Endothelial cell of umbilical vein (primary cell): ENCODE measurements at regions of chr12 and their contacts with region 1.

Region 1: GRCh38 chr12:8544295-8544694 is 3.6 kb upstream of the CLEC4E start:
- DNase-seq: peak; percentile 81
- H3K4me3 ChIP-seq: no peak overlapping the region
- H3K27ac ChIP-seq: no peak overlapping the region
- H3K4me1 ChIP-seq: no peaks in the 10 kb centered on the region
- H3K27me3 ChIP-seq: peaks cover 10 to 22% of the 10 kb centered on the region in 2 experiments
- CTCF ChIP-seq: peak; percentile 74 to 81
- POLR2A ChIP-seq: no peak

Region 2: GRCh38 chr12:7970475-7971252 is 573.6 kb before region 1 on chr12:
- CTCF ChIA-PET with region 1: no interaction called
- POLR2A ChIA-PET with region 1: no interaction called
- dilution Hi-C with region 1: no loop called
- intact Hi-C with region 1: no loop called
- DNase-seq: peak; percentile 94
- H3K4me3 ChIP-seq: peak overlapping the region; percentile 5 to 41 (median 40)
- H3K27ac ChIP-seq: peak overlapping the region; percentile 60
- H3K4me1 ChIP-seq: peaks cover 17% of the 10 kb centered on the region
- H3K27me3 ChIP-seq: no peaks in the 10 kb centered on the region
- CTCF ChIP-seq: no peak
- POLR2A ChIP-seq: peak; percentile 59

Region 3: DNA sequence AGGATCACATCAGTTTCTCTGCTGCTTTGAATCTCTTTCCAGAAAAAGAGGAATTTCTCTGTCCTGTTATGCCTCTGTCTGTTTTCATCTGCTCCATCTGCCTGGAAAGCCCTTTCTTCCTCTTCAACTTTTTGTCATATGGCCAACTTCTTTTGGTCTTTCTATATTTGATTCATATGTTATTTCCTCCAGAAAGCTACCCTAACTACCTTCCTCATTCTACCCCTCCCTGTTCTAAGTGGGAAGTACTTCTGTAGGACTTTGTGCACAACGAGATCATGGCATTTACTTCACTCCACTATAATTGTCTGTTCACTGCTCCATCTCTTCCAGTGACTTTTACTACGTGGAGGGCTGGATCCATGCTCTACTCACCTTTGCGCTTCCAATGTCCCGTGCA is 25.1 kb before region 1 on chr12:
- CTCF ChIA-PET with region 1: interaction called, 11 read pairs
- POLR2A ChIA-PET with region 1: no interaction called
- dilution Hi-C with region 1: no loop called
- intact Hi-C with region 1: no loop called
- DNase-seq: no peak
- H3K4me3 ChIP-seq: no peak overlapping the region
- H3K27ac ChIP-seq: no peak overlapping the region
- H3K4me1 ChIP-seq: no peaks in the 10 kb centered on the region
- H3K27me3 ChIP-seq: peaks cover 0 to 8% of the 10 kb centered on the region in 2 experiments
- CTCF ChIP-seq: no peak
- POLR2A ChIP-seq: no peak

Region 4: GRCh38 chr12:8572507-8572906 is 28.2 kb after region 1 on chr12:
- CTCF ChIA-PET with region 1: interaction called, 10 read pairs
- POLR2A ChIA-PET with region 1: no interaction called
- dilution Hi-C with region 1: no loop called
- intact Hi-C with region 1: no loop called
- DNase-seq: no peak
- H3K4me3 ChIP-seq: no peak overlapping the region
- H3K27ac ChIP-seq: no peak overlapping the region
- H3K4me1 ChIP-seq: no peaks in the 10 kb centered on the region
- H3K27me3 ChIP-seq: no peaks in the 10 kb centered on the region
- CTCF ChIP-seq: no peak
- POLR2A ChIP-seq: no peak

Region 5: GRCh38 chr12:8622646-8623045 is 78.4 kb after region 1 on chr12:
- CTCF ChIA-PET with region 1: interaction called, 24 read pairs
- POLR2A ChIA-PET with region 1: no interaction called
- dilution Hi-C with region 1: no loop called
- intact Hi-C with region 1: no loop called
- DNase-seq: no peak
- H3K4me3 ChIP-seq: no peak overlapping the region
- H3K27ac ChIP-seq: no peak overlapping the region
- H3K4me1 ChIP-seq: peaks cover 14% of the 10 kb centered on the region
- H3K27me3 ChIP-seq: no peaks in the 10 kb centered on the region
- CTCF ChIP-seq: no peak
- POLR2A ChIP-seq: no peak

Region 6: GRCh38 chr12:8662593-8662992 is 118.3 kb after region 1 on chr12 and contains the start of gene MFAP5:
- CTCF ChIA-PET with region 1: interaction called, 56 read pairs
- POLR2A ChIA-PET with region 1: no interaction called
- dilution Hi-C with region 1: no loop called
- intact Hi-C with region 1: no loop called
- DNase-seq: no peak
- H3K4me3 ChIP-seq: no peak within 1 kb of the TSS
- H3K27ac ChIP-seq: no peak within 1 kb of the TSS
- H3K4me1 ChIP-seq: no peaks in the 10 kb centered on the region
- H3K27me3 ChIP-seq: peaks cover 2 to 9% of the 10 kb centered on the region in 2 experiments
- CTCF ChIP-seq: no peak
- POLR2A ChIP-seq: no peak
- total RNA-seq, gene MFAP5: not detected in 2 replicates

Region 7: DNA sequence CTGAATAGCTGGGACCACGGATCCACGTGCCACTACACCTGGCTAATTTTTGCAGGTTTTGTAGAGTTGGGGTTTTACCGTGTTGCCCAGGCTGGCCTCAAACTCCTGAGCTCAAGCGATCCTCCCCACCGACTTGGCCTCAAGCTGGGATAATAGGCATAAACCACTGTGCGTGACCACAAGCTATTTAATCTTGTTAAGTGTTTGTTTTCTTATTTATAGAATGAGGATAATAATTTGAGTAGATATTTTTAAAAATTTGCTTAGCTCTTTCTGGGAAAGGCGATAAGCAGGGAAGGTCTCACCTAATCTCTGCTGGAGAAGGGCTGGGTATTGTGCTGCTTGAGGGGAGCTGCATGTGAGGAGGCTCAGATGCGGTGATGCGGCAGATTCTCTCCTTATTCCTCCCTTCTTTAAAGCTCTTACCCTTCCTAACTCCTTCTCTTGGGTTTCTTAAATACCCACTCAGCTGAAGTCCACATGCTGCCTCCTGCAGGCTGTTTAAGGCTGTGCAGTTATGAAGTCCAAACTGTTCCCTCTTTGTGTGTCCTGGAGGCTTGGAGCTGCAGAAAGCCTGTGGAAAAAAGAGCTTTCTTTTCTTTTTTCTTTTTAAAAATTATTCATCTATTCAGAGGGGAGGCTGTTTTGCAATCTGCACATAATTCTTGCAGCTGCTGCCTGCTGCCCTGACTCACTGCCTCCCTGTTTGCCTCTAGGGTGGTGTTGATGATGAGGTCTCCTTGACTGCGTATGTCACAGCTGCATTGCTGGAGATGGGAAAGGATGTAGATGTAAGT is 316.1 kb after region 1 on chr12:
- CTCF ChIA-PET with region 1: interaction called, 29 read pairs
- POLR2A ChIA-PET with region 1: no interaction called
- dilution Hi-C with region 1: no loop called
- intact Hi-C with region 1: no loop called
- DNase-seq: peak; percentile 59
- H3K4me3 ChIP-seq: no peak overlapping the region
- H3K27ac ChIP-seq: no peak overlapping the region
- H3K4me1 ChIP-seq: no peaks in the 10 kb centered on the region
- H3K27me3 ChIP-seq: no peaks in the 10 kb centered on the region
- CTCF ChIP-seq: peak; percentile 66 to 70
- POLR2A ChIP-seq: no peak

Region 8: GRCh38 chr12:9049520-9050133 is 505.3 kb after region 1 on chr12:
- CTCF ChIA-PET with region 1: interaction called, 155 read pairs
- POLR2A ChIA-PET with region 1: no interaction called
- dilution Hi-C with region 1: no loop called
- intact Hi-C with region 1: loop called (anchors 2 kb)
- DNase-seq: peak; percentile 62
- H3K4me3 ChIP-seq: no peak overlapping the region
- H3K27ac ChIP-seq: no peak overlapping the region
- H3K4me1 ChIP-seq: no peaks in the 10 kb centered on the region
- H3K27me3 ChIP-seq: peaks cover 5 to 13% of the 10 kb centered on the region in 2 experiments
- CTCF ChIP-seq: peak; percentile 13 to 27
- POLR2A ChIP-seq: no peak